Posterior vena cava (tissue), 2 donors: ENCODE measurements at regions of chr4 and their contacts with region 1.

Region 1: DNA sequence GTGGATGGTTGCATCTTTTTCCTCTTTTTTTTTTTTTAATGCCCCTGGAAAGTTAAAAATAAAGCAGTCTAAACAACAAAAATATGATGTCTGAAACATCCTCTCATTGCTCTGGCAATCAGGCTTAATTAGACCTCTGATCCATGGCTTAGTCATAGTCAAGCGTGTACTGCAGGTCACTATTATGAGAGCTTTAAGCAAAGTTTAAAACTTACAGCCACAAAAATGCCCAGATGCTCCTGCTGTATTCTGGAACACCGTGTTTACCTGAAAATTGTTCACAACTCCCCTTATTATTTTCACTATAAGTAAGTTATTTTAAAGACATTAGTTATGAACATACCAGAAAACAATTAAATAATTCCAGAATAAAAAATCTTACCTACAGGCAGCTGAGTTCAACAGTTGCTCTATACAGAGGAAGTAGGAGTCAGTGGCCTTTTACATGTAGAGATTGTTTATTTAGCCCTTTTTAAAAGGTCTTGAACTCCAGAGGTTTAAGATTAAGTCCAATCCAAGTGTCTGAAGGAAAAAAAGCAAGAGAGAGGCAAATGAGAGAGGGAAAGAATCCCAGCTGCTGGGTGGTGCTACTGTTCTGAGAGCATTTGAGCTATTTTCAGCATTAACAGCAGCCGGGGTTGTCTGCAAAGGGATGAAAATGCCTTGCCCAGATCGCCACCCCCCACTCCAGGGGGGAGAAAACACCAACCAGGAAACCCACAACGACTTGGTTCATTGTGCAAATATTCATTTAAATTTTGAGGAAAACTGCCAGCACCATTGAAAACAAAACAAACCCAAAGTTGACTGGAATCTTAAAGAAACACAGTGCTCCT is 36.9 kb downstream of the SORBS2 start:
- DNase-seq: no peak

Region 2: GRCh38 chr4:185534866-185535611 is 240.0 kb before region 1 on chr4 and contains the start of gene PDLIM3:
- intact Hi-C with region 1: no loop called
- DNase-seq: peak; percentile 93
- total RNA-seq, gene PDLIM3: 447 to 540 TPM

Region 3: DNA sequence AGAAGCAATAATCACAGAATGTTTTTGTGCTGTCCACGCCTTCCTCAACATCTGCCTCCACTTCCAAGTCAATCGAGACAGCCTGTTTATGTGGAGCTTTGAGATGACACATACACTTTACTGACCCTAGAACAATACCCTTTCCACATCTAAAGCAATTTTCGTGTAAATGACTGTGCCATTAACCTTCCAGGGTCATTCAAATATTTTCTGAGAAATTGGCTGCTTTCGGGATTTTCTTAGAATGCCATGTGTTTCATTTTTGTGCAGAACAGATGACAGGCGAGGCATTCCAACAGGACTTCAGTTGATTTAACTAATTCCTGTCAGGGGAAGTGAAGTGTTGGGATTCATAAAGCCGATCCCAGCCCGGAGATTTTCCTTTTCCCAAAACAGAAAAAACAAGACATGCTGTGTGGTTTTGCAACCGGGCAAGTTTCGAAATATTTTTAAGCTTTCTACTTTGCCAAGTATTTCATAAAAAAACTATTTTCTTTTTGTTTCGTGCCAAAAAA is 37.0 kb before region 1 on chr4:
- intact Hi-C with region 1: loop called in 1 of 2 experiments (anchors 5 kb)
- DNase-seq: no peak

Region 4: DNA sequence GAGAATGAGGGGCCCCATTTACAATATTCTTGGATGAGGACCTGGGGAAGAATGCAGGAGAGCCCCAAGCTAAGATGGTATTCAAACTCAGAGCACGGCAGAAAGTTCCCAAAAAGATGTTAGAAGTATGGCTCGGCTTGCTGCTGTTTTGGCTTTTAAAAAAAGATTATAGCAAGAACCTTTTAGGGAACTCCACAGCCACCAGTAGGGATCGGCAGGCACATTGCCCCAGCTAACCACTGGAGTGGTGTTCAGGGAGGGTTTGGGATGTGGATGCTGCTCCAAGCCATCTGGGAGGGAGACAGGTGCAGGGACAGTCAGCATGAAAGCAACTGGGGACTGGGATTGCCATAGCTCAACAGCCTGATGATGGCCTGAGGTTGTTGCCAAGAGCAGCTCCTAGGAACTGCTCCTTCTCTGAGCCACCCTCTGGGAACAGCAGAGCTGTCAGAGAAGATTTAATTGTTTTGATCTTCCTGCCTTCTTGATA is 26.1 kb before region 1 on chr4:
- intact Hi-C with region 1: loop called in 1 of 2 experiments (anchors 2 kb)
- DNase-seq: no peak

Region 5: GRCh38 chr4:185839194-185839712 is 64.2 kb after region 1 on chr4:
- intact Hi-C with region 1: no loop called
- DNase-seq: no peak

Region 6: DNA sequence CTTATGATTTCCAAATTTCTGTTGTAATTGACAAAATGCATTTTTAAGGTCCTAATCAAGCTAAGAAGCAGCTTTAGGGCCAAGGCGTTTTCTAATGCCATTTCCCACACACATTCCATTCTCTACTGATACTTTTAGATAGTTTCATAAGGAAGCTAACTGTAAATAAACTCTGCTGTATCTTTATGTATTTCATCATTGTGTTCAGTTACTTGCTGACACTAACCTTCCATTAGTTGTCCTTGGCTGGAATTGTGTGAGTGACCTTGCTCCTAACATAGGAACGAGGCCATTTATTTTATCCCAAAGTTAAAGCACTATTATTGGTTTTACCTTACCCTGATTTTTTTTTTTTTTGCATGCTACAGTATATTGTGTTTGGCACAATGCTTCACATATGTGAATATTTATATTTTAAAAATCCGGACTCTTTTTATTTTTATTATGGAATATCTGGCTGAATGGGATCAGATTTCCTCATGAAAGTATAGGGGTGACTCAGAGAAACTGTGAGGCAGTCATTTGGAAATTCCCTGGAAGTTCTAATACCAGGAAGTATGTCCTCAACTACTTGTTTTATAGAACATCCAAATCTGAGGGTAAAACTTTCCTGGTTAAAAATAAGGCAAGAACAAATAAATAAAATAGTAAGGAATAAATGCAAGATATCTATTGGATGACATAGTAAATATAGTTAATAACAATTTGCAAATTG is 99.6 kb after region 1 on chr4:
- intact Hi-C with region 1: no loop called
- DNase-seq: no peak